MCF 10A (cell line): ENCODE measurements at regions of chr20 and their contacts with region 1.

Region 1: GRCh38 chr20:33666293-33667244 is at the start of gene ACTL10:
- DNase-seq: peak; percentile 99
- H3K4me3 Mint-ChIP-seq: peak within 1 kb of the TSS; percentile 98
- H3K27ac Mint-ChIP-seq: peak within 1 kb of the TSS; percentile 74
- H3K4me1 Mint-ChIP-seq: peaks cover 14% of the 10 kb centered on the region
- H3K27me3 Mint-ChIP-seq: no peaks in the 10 kb centered on the region
- CTCF ChIP-seq: no peak
- total RNA-seq, gene ACTL10: 1.7 and 3.2 TPM in 2 replicates

Region 2: DNA sequence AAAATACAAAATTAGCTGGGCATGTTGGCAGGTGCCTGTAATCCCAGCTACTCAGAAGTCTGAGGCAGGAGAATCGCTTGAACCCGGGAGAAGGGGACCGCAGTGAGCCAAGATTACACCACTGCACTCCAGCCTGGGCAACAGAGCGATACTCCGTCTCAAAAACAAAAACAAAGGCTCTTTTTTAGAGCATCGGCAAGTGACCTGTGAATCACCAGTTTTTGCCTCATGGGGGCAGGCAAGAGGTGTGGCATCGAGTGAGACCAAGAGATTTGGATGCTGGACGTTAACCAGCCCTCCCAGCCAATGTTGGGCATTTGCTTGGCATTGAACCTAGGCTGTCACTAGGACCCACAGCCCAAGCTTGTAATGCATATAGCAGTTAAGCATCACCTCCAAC is 250.6 kb before region 1 on chr20:
- CTCF ChIA-PET with region 1: interaction called, 10 read pairs
- POLR2A ChIA-PET with region 1: interaction called, 3 read pairs
- intact Hi-C with region 1: no loop called
- DNase-seq: peak; percentile 77
- H3K4me3 Mint-ChIP-seq: no peak overlapping the region
- H3K27ac Mint-ChIP-seq: no peak overlapping the region
- H3K4me1 Mint-ChIP-seq: no peaks in the 10 kb centered on the region
- H3K27me3 Mint-ChIP-seq: no peaks in the 10 kb centered on the region
- CTCF ChIP-seq: peak; percentile 42

Region 3: DNA sequence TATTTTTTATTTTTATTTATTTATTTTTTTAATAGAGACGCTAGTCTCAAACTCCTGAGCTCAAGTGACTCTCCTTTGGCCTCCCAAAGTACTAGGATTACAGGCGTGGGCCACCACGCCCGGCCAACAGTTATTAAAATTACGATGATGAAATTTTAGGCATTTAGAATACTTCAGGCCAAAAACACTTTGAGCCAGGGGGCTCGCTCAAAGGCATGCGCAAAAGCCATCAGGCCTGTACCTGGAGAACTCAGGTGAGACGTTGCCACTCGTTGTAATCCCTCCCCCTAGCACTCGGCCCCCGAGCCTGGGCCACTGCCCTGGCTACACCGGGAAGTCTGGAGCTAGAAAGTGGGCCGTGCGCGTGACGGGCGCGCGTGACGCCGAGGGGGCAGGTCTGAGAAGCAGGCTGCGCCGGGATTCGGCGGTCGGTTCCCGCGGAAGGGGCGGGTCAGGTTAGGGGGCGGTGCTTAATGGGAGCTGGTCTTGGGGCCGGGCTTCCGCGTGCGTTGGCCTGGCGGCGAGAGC is 177.0 kb before region 1 on chr20:
- CTCF ChIA-PET with region 1: interaction called, 8 read pairs
- POLR2A ChIA-PET with region 1: interaction called, 38 read pairs
- intact Hi-C with region 1: no loop called
- DNase-seq: peak; percentile 96
- H3K4me3 Mint-ChIP-seq: peak overlapping the region; percentile 83
- H3K27ac Mint-ChIP-seq: peak overlapping the region; percentile 75
- H3K4me1 Mint-ChIP-seq: no peaks in the 10 kb centered on the region
- H3K27me3 Mint-ChIP-seq: no peaks in the 10 kb centered on the region
- CTCF ChIP-seq: no peak

Region 4: DNA sequence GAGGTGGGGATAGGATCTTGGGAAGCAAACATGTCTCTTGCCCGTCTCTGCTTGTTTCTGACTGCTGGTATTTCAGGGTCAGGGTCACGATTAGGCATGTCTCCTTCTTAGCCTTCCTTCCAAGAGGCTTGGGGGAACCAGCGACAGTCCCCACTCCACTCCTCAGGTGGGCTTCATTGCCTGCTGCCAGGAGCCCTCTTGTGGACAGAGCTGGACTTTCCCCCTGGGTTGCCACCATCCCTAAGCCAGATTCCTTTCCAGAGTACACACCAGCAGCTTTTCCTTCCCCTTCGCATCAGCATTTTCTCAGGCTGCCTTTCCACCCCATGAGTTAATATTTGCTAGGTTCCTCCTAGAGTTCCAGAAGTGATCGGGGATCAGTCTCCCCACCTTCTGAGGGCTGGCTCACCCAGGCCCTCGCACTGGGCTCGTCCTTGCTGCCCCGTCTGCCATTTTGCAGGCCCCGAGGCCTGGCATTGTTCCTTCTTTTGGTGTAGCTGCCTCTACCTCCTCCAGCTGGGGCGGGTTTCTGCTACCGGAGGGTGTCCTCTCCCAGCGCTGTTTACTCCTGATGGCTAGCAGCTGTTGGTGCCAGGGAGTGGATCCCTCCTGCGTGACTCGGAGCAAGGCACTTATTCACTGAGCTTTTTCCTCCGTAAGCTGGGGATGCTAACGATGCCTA is 13.2 kb before region 1 on chr20:
- CTCF ChIA-PET with region 1: interaction called, 28 read pairs
- POLR2A ChIA-PET with region 1: interaction called, 18 read pairs
- intact Hi-C with region 1: no loop called
- DNase-seq: peak; percentile 57
- H3K4me3 Mint-ChIP-seq: no peak overlapping the region
- H3K27ac Mint-ChIP-seq: no peak overlapping the region
- H3K4me1 Mint-ChIP-seq: peaks cover under 1% of the 10 kb centered on the region
- H3K27me3 Mint-ChIP-seq: no peaks in the 10 kb centered on the region
- CTCF ChIP-seq: peak; percentile 76

Region 5: GRCh38 chr20:33731693-33732165 is 65.2 kb after region 1 on chr20 and contains the start of gene ZNF341:
- CTCF ChIA-PET with region 1: interaction called, 3 read pairs
- POLR2A ChIA-PET with region 1: interaction called, 14 read pairs
- intact Hi-C with region 1: loop called (anchors 2 kb)
- DNase-seq: peak; percentile 79
- H3K4me3 Mint-ChIP-seq: peak within 1 kb of the TSS; percentile 86
- H3K27ac Mint-ChIP-seq: peak within 1 kb of the TSS; percentile 91
- H3K4me1 Mint-ChIP-seq: peaks cover 20% of the 10 kb centered on the region
- H3K27me3 Mint-ChIP-seq: no peaks in the 10 kb centered on the region
- CTCF ChIP-seq: peak; percentile 82
- total RNA-seq, gene ZNF341: 2.0 and 2.5 TPM in 2 replicates

Region 6: DNA sequence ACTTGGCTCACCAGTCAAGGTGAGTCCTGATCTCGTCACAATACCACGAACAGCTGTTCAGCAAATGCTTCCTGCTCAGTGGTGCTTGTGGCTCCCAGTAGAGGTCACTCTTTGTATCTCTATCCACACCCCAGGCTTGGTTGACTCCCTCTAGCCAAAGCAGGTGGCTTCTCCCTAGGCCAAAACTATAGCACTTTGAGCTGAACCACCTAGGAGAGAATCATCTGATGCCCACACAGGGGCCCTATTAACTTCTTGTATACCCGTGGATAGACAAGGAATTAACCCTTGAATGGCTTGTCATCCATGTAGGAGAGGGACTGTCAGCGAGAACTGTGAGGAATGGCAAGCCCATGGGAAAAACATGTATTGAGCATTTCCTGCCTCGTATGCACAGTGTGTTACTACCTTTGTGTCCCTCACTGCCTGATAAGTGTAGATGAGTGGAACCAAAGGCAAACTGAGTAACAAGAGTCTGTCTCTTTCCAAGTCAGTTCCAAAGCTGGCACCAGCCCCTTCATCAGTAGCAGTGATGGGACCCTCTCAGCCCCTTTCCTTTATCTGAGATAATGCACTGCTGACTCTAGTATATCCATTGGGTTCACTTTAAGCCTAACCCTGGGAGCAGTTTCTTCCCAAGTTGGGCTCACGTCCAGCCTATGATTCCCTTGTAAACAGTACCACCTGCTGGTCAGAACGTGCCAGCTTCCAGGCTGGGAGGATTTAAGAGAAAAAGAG is 402.9 kb after region 1 on chr20:
- CTCF ChIA-PET with region 1: interaction called, 37 read pairs
- POLR2A ChIA-PET with region 1: interaction called, 10 read pairs
- intact Hi-C with region 1: loop called (anchors 5 kb)
- DNase-seq: peak; percentile 85
- H3K4me3 Mint-ChIP-seq: no peak overlapping the region
- H3K27ac Mint-ChIP-seq: no peak overlapping the region
- H3K4me1 Mint-ChIP-seq: peaks cover 21% of the 10 kb centered on the region
- H3K27me3 Mint-ChIP-seq: no peaks in the 10 kb centered on the region
- CTCF ChIP-seq: peak; percentile 88